Activated T-helper 1 cell treated with anti-CD3 and anti-CD28 coated beads, Interleukin-12 subunit alpha, Interleukin-12 subunit beta, Interleukin-2, Interleukin-4 antibody, amounts not matched to agents 30 ng/mL and 10 ng/mL and 1 ng/mL, durations not matched to agents 14 hours and 24 hours and 36 hours (primary cell): ENCODE measurements at regions of chr3 and their contacts with region 1.

Region 1: DNA sequence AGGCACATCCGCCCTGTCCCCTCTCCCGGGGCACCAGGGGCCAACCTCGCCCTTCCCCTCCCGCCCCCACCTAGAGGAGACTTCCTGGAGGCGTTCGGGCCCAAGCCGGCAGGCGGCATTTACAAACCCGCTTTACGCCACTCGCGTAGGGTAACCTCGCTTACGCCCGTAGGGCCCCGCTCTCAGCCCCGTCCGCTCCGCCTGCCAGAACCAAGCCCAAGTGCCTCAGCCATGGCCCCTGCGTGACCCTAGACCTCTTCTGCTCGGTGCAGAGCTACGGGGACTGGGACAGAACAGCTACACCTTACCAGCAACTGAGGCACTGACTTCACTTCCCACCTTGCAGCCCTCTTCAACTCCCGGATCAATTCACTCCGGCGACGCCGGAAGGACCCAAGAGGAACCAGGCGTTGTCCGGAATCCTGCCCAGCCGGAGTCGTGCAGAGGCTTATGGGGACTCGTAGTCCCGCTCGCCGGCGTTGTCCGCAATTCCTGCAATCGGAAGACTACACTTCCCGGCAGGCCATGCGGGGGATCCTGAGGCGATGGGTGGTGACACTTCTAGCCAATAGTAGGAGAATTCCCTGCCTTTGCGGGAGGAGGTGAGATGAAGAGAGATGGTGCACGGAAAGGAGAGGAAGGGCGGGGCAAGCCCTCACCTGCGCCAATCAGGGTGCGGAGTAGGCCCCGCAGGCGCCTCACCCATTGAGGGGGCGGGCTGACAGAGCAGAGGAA is at the start of gene PDCD10:
- DNase-seq: peak; percentile 97
- H3K4me3 Mint-ChIP-seq: no peak within 1 kb of the TSS
- H3K27ac Mint-ChIP-seq: no peak within 1 kb of the TSS
- H3K4me1 Mint-ChIP-seq: peaks cover 5% of the 10 kb centered on the region
- H3K27me3 Mint-ChIP-seq: no peaks in the 10 kb centered on the region
- total RNA-seq, gene PDCD10: 66.2 and 74.5 TPM in 2 replicates

Region 2: DNA sequence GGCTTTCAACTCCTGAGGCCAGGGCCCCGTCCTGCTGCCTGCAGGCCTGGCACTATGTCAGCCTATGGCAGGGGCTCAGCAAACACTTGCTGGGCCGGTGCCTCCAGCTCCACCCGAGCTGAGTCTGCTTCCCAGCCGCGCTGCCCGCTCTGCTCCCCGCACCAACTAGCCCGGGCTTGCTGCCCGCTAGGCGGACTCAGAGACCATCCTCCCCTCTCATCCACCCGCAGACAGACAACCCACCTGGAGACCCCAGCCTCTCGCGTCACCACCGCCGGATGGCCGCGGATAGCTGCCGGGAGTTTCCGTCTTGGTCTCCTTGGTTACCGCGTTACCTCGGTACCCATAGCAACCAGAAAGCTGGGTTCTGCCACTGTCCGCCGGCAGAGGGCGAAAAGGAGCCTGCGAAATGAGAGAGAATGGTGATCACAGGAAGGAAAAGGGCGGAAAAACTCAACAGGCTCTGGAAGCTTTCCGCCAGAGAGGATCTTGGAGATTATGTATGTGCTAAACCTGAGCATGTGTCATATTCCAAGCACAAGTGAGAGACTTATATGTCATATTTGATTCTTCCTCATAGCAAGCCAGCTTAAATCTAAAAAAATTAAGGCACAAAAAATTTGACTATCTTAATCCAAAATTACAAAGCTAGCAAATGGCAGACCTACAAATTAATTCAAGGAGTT is 354.5 kb before region 1 on chr3 and contains the start of gene ZBBX:
- intact Hi-C with region 1: loop called (anchors 2 kb)
- DNase-seq: peak; percentile 81
- H3K4me3 Mint-ChIP-seq: peak within 1 kb of the TSS; percentile 74
- H3K27ac Mint-ChIP-seq: no peak within 1 kb of the TSS
- H3K4me1 Mint-ChIP-seq: peaks cover 9% of the 10 kb centered on the region
- H3K27me3 Mint-ChIP-seq: peaks cover 4% of the 10 kb centered on the region
- total RNA-seq, gene ZBBX: not detected in 2 replicates

Region 3: GRCh38 chr3:167691366-167691765 is 43.3 kb before region 1 on chr3:
- intact Hi-C with region 1: loop called (anchors 1 kb)
- DNase-seq: peak; percentile 22
- H3K4me3 Mint-ChIP-seq: peak overlapping the region; percentile 0
- H3K27ac Mint-ChIP-seq: peak overlapping the region; percentile 5
- H3K4me1 Mint-ChIP-seq: peaks cover 27% of the 10 kb centered on the region
- H3K27me3 Mint-ChIP-seq: no peaks in the 10 kb centered on the region

Region 4: GRCh38 chr3:167882067-167882667 is 147.5 kb after region 1 on chr3:
- intact Hi-C with region 1: loop called (anchors 5 kb)
- DNase-seq: no peak
- H3K4me3 Mint-ChIP-seq: no peak overlapping the region
- H3K27ac Mint-ChIP-seq: no peak overlapping the region
- H3K4me1 Mint-ChIP-seq: no peaks in the 10 kb centered on the region
- H3K27me3 Mint-ChIP-seq: peaks cover 9% of the 10 kb centered on the region

Region 5: DNA sequence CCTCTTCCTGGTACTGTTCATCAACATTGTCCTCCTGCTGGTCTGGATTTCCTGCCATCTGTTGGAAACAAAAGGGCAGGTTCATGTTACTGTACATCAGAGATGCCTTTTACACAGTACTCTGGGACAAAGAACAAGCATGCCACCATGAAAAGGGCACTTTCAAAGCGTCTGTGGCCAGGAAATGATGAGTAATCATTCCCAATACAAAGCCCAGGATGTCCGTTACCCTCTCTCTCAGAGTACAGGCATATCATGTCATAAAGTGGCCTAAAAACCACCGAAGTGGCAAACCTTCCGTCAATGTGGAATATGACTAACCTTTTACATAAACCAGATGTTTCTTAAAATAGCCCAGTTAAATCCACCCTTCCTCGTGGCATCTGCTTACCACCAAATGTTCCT is 289.9 kb after region 1 on chr3:
- intact Hi-C with region 1: loop called (anchors 1 kb)
- DNase-seq: peak; percentile 26
- H3K4me3 Mint-ChIP-seq: peak overlapping the region; percentile 12
- H3K27ac Mint-ChIP-seq: peak overlapping the region; percentile 71
- H3K4me1 Mint-ChIP-seq: peaks cover 50% of the 10 kb centered on the region
- H3K27me3 Mint-ChIP-seq: no peaks in the 10 kb centered on the region